ENCODE measurements at regions of chr9 and their contacts with region 1.

Region 1: GRCh38 chr9:97487107-97487506 is 14.4 kb upstream of the TMOD1 start:
- DNase-seq: no peak
- ATAC-seq: peak; percentile 42; the same call in 2 of the 3 replicates
- H3K4me3 ChIP-seq: no peak overlapping the region
- H3K27ac ChIP-seq: no peak overlapping the region
- H3K4me1 ChIP-seq: peaks cover 5% of the 10 kb centered on the region; the same call in 1 of the 2 replicates
- H3K27me3 ChIP-seq: no peaks in the 10 kb centered on the region
- CTCF ChIP-seq: 0 out of 6 replicates have a peak, but pooled peaks of 1 of the 3 experiments have one; percentile 17
- EP300 ChIP-seq: no peak
- POLR2A ChIP-seq: no peak
- RAD21 ChIP-seq: no peak

Region 2: DNA sequence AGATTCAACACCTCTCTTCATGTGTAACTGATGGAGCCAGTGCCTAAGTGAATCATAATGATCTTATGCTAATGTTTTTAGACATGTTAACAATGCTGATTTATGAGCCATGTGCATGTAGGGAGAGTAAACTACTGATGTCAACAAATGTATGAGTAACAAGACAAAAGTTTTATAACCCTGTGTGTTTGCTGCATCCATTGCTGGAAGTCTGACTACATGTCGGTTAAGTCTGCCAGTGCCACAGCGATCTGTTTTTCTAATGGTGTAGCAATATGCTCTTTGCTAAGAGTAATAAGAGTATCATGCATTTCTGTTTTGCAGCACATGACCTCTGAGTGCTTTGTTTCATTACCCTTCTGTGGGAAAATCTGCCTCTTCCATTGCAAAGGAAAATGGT is 12.0 kb before region 1 on chr9:
- CTCF ChIA-PET with region 1: interaction called, 90 read pairs
- POLR2A ChIA-PET with region 1: interaction called, 3 read pairs
- RAD21 ChIA-PET with region 1: interaction called, 3 read pairs
- SMC1A ChIA-PET with region 1: interaction called, 51 read pairs
- in situ Hi-C with region 1: no loop called
- intact Hi-C with region 1: no loop called
- DNase-seq: no peak
- ATAC-seq: no peak
- H3K4me3 ChIP-seq: no peak overlapping the region
- H3K27ac ChIP-seq: no peak overlapping the region
- H3K4me1 ChIP-seq: peaks cover under 1% of the 10 kb centered on the region; the same call in 1 of the 2 replicates
- H3K27me3 ChIP-seq: no peaks in the 10 kb centered on the region
- CTCF ChIP-seq: no peak
- EP300 ChIP-seq: no peak
- POLR2A ChIP-seq: no peak
- RAD21 ChIP-seq: no peak